Lower leg skin (tissue), 4 donors: ENCODE measurements at regions of chr17 and their contacts with region 1.

Region 1: DNA sequence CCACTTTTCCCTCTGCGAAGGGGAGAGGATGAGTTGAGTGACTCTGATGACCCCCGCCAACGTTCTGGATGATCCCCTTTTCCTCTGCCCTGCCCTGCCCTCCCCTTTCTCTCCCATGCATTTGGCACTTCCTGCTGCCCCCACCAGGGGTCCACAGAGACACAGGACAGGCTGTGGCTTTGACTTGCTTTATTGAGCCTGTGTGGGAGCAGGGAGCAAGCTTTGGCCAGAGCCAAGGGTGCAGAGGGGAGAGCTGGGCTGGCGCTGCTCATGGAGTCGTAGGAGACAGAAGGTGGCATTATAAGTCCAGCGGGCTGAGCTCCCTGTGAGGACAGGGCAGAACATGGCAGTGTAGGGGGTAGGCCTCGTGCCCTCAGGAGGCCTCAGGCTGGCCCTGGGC is 1.6 kb downstream of the PPY start:
- DNase-seq: no peak
- H3K4me3 ChIP-seq: no peak overlapping the region
- CTCF ChIP-seq: no peak
- POLR2A ChIP-seq: no peak

Region 2: DNA sequence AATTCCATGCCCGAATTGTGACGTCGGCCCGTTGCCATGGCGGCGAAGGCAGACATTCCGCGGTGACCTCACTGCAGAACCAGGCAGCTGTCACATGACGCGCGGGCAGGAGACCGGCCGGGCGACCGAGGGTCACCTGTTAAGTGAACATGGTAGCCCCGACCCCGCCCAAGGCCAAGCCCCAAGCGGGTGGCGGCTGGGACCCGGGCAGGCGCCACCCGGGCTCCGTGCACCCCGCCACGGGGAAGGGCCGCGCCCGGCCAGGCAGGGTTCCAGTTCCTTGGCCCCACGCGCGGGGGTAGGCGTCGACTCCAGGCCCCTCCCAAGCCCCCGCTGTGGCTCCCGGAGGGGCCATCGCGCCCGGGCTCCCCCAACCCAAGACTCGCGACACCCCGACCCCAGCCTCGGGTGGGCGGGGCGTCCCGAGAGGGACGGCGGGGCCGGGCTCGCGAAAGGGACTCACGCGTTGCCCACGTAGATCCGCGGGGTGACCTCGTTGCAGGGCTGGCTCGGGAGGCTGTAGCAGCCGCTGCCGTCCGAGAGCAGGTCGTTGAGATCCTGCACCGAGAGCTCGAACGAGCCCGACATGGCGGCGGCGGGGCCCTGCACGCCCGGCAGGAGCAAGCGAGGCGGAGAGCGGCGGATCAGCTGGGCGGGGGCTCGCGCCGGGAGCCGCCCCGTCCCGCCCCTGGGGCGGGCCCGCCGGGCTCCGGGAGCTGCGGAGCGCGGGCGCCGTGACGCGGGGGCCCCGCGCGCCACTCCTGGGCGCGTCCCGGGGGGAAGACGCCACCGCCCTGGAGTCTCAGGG is 162.1 kb before region 1 on chr17 and contains the start of gene DUSP3:
- intact Hi-C with region 1: no loop called
- DNase-seq: peak; percentile 92 to 99
- H3K4me3 ChIP-seq: peak within 1 kb of the TSS; percentile 82
- CTCF ChIP-seq: no peak
- POLR2A ChIP-seq: peak in 1 of 2 donors; percentile 72
- total RNA-seq, gene DUSP3: 33.2 to 44.1 (median 37.9) TPM

Region 3: DNA sequence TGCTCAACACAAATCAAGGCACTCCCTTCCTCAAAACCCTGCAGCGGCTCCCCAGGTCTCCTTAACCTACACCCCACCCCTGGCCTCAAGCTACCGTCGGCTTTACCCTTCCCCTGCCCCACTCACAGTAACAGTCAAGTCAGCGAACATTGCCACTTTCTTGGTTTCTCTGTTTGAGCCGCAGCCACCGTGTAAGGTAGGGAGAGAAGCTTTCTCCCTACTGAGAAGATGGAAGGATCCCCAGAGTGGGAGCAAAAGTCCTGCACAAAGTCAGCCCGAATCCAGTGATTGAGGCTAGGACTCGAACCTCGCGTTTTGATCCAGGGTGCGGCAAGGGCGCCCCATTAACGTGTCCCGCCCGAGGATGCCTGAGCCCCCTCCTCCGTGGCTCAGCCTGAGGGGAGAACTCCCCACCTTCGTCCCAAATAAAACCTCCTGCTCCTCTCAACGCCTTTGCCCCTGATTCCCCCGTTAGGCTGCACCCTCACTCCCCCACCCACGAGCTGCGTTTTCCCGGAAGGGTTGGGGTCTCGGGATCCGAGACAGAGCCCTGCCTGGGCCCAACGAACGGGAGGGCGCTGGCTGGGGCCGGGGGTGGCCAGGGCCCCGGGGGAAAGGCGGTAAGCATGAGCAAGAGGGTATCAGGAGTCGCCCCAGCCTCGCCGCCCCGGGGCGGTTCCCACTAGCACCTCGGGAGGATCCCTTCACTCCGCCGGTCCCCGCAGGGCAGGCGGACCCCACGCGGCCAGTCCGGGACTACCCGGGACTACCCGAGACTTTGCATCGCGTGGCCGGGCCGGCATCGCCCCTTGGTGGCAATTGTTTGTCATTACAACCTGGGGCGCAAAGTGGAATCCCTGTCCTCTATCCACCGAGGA is 53.9 kb after region 1 on chr17:
- intact Hi-C with region 1: loop called (anchors 10 kb)
- DNase-seq: peak; percentile 46 to 95
- H3K4me3 ChIP-seq: no peak overlapping the region
- CTCF ChIP-seq: peak in 1 of 3 donors; percentile 45
- POLR2A ChIP-seq: no peak

Region 4: GRCh38 chr17:44044067-44044466 is 103.4 kb after region 1 on chr17:
- intact Hi-C with region 1: loop called (anchors 5 kb)
- DNase-seq: no peak
- H3K4me3 ChIP-seq: no peak overlapping the region
- CTCF ChIP-seq: no peak
- POLR2A ChIP-seq: no peak